ENCODE measurements at regions of chr2 and their contacts with region 1.

Region 1: GRCh38 chr2:112259509-112260294 is 4.9 kb upstream of the ZC3H8 start:
- DNase-seq: peak; percentile 91
- ATAC-seq: peak; percentile 42
- H3K4me3 Mint-ChIP-seq: peak overlapping the region; percentile 53
- H3K27ac Mint-ChIP-seq: peak overlapping the region; percentile 60
- H3K4me1 Mint-ChIP-seq: peaks cover 17% of the 10 kb centered on the region
- H3K27me3 Mint-ChIP-seq: peaks cover 2% of the 10 kb centered on the region

Region 2: DNA sequence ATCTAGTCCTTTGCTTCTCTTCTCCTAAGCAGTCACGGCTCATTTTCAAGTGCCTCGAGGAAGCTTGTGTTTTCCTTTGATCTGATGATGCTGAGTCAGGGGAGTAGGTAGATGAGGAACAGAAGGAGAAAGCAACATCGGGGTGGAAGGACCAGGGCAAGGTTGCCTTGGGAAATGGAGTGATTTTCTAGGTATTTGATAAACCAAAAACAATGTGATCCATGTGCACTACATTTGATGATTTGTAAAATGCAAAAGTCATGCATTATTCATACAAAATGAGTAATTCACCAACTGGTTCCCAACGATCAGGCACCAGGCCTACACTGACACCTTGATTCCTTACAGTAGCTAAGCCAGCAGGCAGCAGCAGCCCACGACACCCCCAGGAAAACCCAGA is 581.1 kb before region 1 on chr2:
- CTCF ChIA-PET with region 1: no interaction called
- POLR2A ChIA-PET with region 1: no interaction called
- DNase-seq: no peak
- ATAC-seq: no peak
- H3K4me3 Mint-ChIP-seq: no peak overlapping the region
- H3K27ac Mint-ChIP-seq: no peak overlapping the region
- H3K4me1 Mint-ChIP-seq: peaks cover 6% of the 10 kb centered on the region
- H3K27me3 Mint-ChIP-seq: peaks cover 19% of the 10 kb centered on the region

Region 3: GRCh38 chr2:112121682-112122254 is 137.9 kb before region 1 on chr2:
- CTCF ChIA-PET with region 1: interaction called, 30 read pairs
- POLR2A ChIA-PET with region 1: no interaction called
- DNase-seq: peak; percentile 68
- ATAC-seq: no peak
- H3K4me3 Mint-ChIP-seq: no peak overlapping the region
- H3K27ac Mint-ChIP-seq: no peak overlapping the region
- H3K4me1 Mint-ChIP-seq: no peaks in the 10 kb centered on the region
- H3K27me3 Mint-ChIP-seq: no peaks in the 10 kb centered on the region

Region 4: DNA sequence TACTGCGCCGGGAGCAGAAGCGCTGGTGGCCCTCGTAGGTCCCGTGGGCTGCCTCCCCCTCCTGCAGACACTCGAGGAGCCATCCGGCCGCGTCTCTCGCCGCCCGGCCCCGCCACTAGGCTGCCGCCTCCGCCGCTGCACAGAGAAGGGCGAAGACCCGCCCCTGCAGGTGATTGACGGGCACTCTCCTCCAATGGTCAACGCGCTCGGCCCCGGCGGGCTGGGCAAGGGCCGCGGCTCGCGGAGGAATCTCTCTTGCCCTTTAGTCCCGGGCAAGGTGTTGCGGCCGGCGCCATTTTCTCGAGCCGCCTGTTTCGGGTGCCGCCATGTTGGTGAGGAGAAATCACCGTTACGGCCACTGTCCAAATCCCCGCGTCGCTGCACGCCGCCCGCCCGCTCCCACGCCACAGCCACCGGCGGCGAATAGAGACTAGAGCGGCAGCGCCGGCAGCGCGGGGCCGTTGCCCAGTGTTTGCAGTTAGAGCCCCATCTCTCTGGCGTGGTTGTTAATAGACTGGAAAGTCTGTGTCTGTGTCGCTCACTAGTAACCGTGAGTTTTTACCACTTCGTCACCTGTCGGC is 15.7 kb after region 1 on chr2 and contains the start of gene ZC3H6:
- CTCF ChIA-PET with region 1: interaction called, 21 read pairs
- POLR2A ChIA-PET with region 1: interaction called, 6 read pairs
- DNase-seq: peak; percentile 99
- ATAC-seq: peak; percentile 96
- H3K4me3 Mint-ChIP-seq: peak within 1 kb of the TSS; percentile 94
- H3K27ac Mint-ChIP-seq: peak within 1 kb of the TSS; percentile 99
- H3K4me1 Mint-ChIP-seq: peaks cover 15% of the 10 kb centered on the region
- H3K27me3 Mint-ChIP-seq: no peaks in the 10 kb centered on the region
- total RNA-seq, gene ZC3H6: 8.4 to 9.0 TPM

Region 5: DNA sequence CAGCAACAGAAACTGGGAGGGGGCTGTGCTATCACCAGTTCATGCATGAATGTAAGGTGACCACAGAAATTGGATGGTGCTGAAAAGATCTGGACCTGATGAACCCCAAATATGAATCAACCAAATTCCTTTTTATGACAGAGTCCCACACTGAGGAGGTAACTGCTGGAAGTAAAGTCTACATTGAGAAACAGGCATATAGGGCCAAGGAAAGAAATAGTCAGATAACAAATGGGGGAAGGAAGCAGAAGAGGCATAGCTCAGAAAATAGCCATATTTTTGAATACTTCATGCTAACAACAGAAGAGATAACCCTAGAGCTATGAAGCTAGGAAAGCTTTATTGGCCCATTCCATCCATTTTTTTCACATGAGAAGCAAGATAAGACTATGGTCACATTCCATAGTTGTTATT is 41.5 kb after region 1 on chr2:
- CTCF ChIA-PET with region 1: no interaction called
- POLR2A ChIA-PET with region 1: no interaction called
- DNase-seq: no peak
- ATAC-seq: no peak
- H3K4me3 Mint-ChIP-seq: no peak overlapping the region
- H3K27ac Mint-ChIP-seq: no peak overlapping the region
- H3K4me1 Mint-ChIP-seq: peaks cover 2% of the 10 kb centered on the region
- H3K27me3 Mint-ChIP-seq: no peaks in the 10 kb centered on the region

Measured in activated CD8-positive, alpha-beta T cell treated with anti-CD3 and anti-CD28 coated beads, Interleukin-2, amount 10 ng/mL, durations not matched to agents 7 days and 5 days (primary cell).